ENCODE measurements at regions of chr2 and their contacts with region 1.

Region 1: GRCh38 chr2:174682578-174683391 is 81.5 kb downstream of the CHRNA1 start:
- DNase-seq: peak in 1 of 2 donors; percentile 82
- H3K4me3 ChIP-seq: peak overlapping the region; percentile 83 to 84
- H3K27ac ChIP-seq: peak overlapping the region; percentile 86 to 95
- H3K4me1 ChIP-seq: peaks cover 4 to 21% of the 10 kb centered on the region in 2 donors
- H3K27me3 ChIP-seq: no peaks in the 10 kb centered on the region
- CTCF ChIP-seq: no peak

Region 2: DNA sequence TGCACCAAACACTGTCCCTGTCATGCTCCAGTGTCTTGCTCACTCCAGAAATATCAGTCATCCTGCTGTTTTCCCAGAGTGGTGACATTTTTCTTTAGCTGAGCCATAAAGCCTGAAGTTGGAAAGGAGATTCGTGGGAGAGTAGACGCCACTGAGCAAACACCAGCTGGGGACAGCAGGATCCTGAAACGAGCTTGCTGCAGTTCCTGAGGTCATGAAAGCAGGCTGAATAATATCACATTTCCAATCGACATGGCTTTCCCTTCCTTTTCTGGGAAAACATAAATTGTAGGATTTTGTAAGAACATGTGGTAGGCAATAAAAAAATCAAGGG is 1051.7 kb before region 1 on chr2:
- intact Hi-C with region 1: no loop called
- DNase-seq: no peak
- H3K4me3 ChIP-seq: no peak overlapping the region
- H3K27ac ChIP-seq: no peak overlapping the region
- H3K4me1 ChIP-seq: no peaks in the 10 kb centered on the region
- H3K27me3 ChIP-seq: no peaks in the 10 kb centered on the region
- CTCF ChIP-seq: no peak

Region 3: GRCh38 chr2:174603280-174603679 is 79.5 kb before region 1 on chr2:
- intact Hi-C with region 1: loop called (anchors 2 kb)
- DNase-seq: peak; percentile 35 to 83
- H3K4me3 ChIP-seq: no peak overlapping the region
- H3K27ac ChIP-seq: no peak overlapping the region
- H3K4me1 ChIP-seq: peaks cover 3 to 17% of the 10 kb centered on the region in 2 donors
- H3K27me3 ChIP-seq: no peaks in the 10 kb centered on the region
- CTCF ChIP-seq: peak; percentile 60 to 73 (median 63)

Region 4: DNA sequence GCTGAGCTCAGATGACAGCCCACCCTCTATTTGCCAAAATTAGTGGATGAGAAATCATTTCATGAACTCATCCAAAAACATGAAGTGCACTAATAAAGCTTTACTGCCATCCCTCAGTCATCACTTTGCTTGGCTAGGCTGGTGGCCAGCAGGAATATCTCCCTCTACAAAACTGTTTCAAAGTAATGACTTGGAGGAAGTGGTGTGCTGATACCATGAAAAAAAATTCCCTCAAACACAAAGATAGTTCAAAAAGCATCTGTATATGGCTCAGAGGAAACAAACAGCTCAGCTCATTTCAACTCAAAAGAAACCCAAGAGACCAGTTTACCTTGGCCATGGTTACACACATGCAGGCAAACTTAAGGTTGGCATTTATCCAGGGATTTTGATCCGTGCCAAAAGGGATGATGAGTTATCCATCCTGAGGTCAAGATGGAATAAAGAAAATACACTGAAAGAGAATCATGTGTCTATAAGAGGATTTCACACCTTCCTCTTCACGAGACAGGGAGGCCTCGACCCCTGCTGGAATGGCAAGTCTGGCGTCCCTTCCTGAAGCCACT is 66.8 kb before region 1 on chr2:
- intact Hi-C with region 1: loop called (anchors 1 kb)
- DNase-seq: no peak
- H3K4me3 ChIP-seq: no peak overlapping the region
- H3K27ac ChIP-seq: peak overlapping the region; percentile 70 to 81
- H3K4me1 ChIP-seq: peaks cover 7 to 47% of the 10 kb centered on the region in 2 donors
- H3K27me3 ChIP-seq: no peaks in the 10 kb centered on the region
- CTCF ChIP-seq: no peak

Region 5: GRCh38 chr2:174663550-174663949 is 19.2 kb before region 1 on chr2:
- intact Hi-C with region 1: loop called (anchors 2 kb)
- DNase-seq: peak in 1 of 2 donors; percentile 80
- H3K4me3 ChIP-seq: peak overlapping the region in 1 of 2 donors; percentile 6
- H3K27ac ChIP-seq: peak overlapping the region; percentile 79 to 84
- H3K4me1 ChIP-seq: peaks cover 33 to 34% of the 10 kb centered on the region in 2 donors
- H3K27me3 ChIP-seq: no peaks in the 10 kb centered on the region
- CTCF ChIP-seq: no peak

Measured in ascending aorta (tissue), 2 donors.